Transverse colon (tissue), 4 donors: ENCODE measurements at regions of chr15 and their contacts with region 1.

Region 1: DNA sequence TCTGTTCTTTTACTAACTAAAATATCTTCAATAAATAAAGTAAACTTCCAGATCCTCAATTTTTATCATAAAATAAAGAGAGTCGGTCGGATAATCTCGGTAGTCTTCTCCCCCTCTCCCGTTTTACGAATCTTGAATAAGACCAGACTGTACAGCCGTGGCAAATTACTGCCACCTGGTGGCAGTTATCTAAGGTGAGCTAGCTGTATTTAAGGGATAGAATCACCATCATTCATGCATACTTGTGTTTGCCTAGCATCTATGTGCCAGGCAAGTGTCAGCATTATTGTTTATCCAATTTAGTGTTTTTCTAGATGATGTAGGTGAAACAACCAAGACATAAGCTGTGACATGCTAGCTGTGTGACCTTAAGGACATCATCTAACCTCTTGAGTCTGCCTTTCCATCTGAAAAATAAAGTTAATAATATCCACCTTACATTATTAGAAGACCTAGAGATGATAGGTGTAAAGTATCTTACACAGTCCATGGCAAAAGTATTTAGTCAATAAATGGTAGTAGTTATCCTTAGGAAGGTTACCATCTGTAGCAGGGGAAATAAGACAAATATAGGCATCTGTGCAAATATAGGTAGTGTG is 21.3 kb downstream of the DUT start:
- DNase-seq: peak; percentile 44
- H3K4me3 ChIP-seq: no peak overlapping the region
- H3K27ac ChIP-seq: no peak overlapping the region
- H3K4me1 ChIP-seq: peaks cover 0 to 3% (median 1%) of the 10 kb centered on the region in 4 donors
- H3K27me3 ChIP-seq: no peaks in the 10 kb centered on the region
- CTCF ChIP-seq: peak; percentile 65 to 84 (median 74)
- EP300 ChIP-seq: no peak
- POLR2A ChIP-seq: no peak

Region 2: DNA sequence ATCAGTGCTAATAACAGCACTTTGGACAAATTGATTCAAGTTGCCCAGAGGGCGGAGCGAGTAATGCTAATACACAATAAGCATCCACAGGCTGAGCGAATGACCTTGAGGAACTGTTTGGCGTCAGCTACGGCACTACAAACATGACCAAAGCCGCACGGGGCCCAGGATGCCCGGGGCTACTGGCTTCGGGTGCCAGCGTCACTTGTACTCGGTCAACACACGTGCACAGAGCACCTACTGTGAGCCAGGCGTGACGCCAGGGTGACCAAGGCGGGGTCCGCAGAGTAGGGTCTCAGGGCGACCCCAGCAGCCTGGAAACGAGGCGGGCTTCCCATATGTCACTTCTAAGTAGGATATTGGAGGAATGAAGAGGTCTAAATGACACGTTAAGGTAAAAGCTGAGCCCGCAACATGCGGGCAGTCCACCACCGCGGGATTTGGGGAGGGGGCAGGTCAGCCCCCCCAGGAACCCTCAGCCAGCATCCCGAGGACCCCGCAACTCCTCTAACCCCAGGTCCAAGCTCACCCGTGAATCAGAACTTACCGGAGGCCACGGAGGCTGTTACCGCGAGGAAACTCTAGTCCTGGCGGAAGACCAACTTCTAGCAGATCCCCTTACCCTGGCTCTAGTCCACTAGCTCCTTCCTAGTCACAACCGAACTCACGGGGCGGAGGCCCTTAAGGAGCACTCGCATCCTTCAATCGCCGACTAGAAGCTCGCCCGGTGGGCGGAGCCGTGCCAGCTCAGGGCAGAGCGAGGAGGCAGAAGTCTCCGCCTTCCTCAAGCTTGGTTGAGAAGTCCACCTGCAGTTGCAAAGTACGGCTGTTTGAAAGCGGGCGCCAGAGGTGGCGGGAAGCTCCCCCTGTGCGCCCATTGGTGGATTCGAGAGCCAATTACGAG is 458.1 kb after region 1 on chr15 and contains the start of gene CEP152:
- in situ Hi-C with region 1: loop called in 1 of 4 experiments (anchors 25 kb)
- intact Hi-C with region 1: no loop called
- DNase-seq: peak; percentile 99
- H3K4me3 ChIP-seq: peak within 1 kb of the TSS; percentile 61 to 78 (median 70)
- H3K27ac ChIP-seq: peak within 1 kb of the TSS; percentile 59 to 78 (median 70)
- H3K4me1 ChIP-seq: peaks cover 0 to 15% (median 8%) of the 10 kb centered on the region in 4 donors
- H3K27me3 ChIP-seq: no peaks in the 10 kb centered on the region
- CTCF ChIP-seq: peak in 1 of 5 experiments; percentile 28
- EP300 ChIP-seq: no peak
- POLR2A ChIP-seq: peak; percentile 68
- total RNA-seq, gene CEP152: 3.4 to 16.7 (median 9.8) TPM